ENCODE measurements at regions of chr3 and their contacts with region 1.

Region 1: GRCh38 chr3:194682694-194683310 is 2.9 kb upstream of the FAM43A start:
- DNase-seq: peak; percentile 70 to 93 (median 78)
- H3K4me3 ChIP-seq: no peak overlapping the region
- H3K27ac ChIP-seq: peak overlapping the region in 3 of 5 donors; percentile 13 to 60 (median 48)
- H3K4me1 ChIP-seq: peaks cover 18 to 30% of the 10 kb centered on the region in 2 donors
- H3K27me3 ChIP-seq: peaks cover 7% of the 10 kb centered on the region
- CTCF ChIP-seq: peak; percentile 63 to 97 (median 93)
- POLR2A ChIP-seq: no peak

Region 2: GRCh38 chr3:194536871-194537637 is 145.7 kb before region 1 on chr3:
- intact Hi-C with region 1: no loop called
- DNase-seq: peak; percentile 44 to 73 (median 62)
- H3K4me3 ChIP-seq: no peak overlapping the region
- H3K27ac ChIP-seq: peak overlapping the region in 2 of 5 donors; percentile 58 to 62
- H3K4me1 ChIP-seq: peaks cover 9 to 10% of the 10 kb centered on the region in 2 donors
- H3K27me3 ChIP-seq: no peaks in the 10 kb centered on the region
- CTCF ChIP-seq: no peak
- POLR2A ChIP-seq: no peak

Region 3: DNA sequence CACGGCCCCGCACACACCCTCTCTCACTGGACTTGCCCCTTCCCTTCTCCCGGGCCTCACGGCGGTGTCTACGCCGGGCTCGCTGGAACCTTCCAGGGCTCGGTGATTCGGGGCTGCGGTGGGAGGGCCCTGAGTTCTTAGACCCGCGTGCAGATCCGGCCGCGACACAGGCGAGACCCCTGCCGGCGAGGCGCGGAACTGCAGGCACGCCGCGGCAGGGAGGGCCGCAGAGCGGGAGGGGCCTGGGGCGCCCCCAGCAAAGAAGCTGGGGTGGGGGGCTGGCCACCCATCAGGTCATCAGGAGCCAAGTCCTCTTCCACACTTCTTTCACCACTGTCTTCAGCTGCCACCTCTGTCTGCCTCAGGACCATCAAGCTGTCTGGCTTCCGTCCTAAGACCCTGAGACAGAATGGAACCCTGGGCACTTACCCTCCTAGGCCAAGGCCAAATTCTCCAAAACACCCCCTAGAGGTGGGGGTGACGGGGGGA is 423.7 kb after region 1 on chr3:
- intact Hi-C with region 1: loop called (anchors 5 kb)
- DNase-seq: peak; percentile 29 to 80 (median 64)
- H3K4me3 ChIP-seq: peak overlapping the region in 1 of 4 donors; percentile 31
- H3K27ac ChIP-seq: no peak overlapping the region
- H3K4me1 ChIP-seq: peaks cover 8 to 17% of the 10 kb centered on the region in 2 donors
- H3K27me3 ChIP-seq: no peaks in the 10 kb centered on the region
- CTCF ChIP-seq: peak; percentile 84 to 100 (median 98)
- POLR2A ChIP-seq: no peak

Region 4: GRCh38 chr3:195259475-195260279 is 576.9 kb after region 1 on chr3:
- intact Hi-C with region 1: loop called in 1 of 2 experiments (anchors 2 kb)
- DNase-seq: peak; percentile 84 to 95 (median 89)
- H3K4me3 ChIP-seq: peak overlapping the region in 3 of 4 donors; percentile 23 to 76 (median 71)
- H3K27ac ChIP-seq: peak overlapping the region; percentile 52 to 93 (median 66)
- H3K4me1 ChIP-seq: peaks cover 9 to 24% of the 10 kb centered on the region in 2 donors
- H3K27me3 ChIP-seq: no peaks in the 10 kb centered on the region
- CTCF ChIP-seq: peak in 4 of 6 experiments; percentile 21 to 100 (median 92)
- POLR2A ChIP-seq: peak; percentile 31 to 66

Region 5: GRCh38 chr3:195522254-195523023 is 839.6 kb after region 1 on chr3:
- intact Hi-C with region 1: loop called in 1 of 2 experiments (anchors 10 kb)
- DNase-seq: no peak
- H3K4me3 ChIP-seq: no peak overlapping the region
- H3K27ac ChIP-seq: no peak overlapping the region
- H3K4me1 ChIP-seq: no peaks in the 10 kb centered on the region
- H3K27me3 ChIP-seq: no peaks in the 10 kb centered on the region
- CTCF ChIP-seq: peak; percentile 67 to 88 (median 80)
- POLR2A ChIP-seq: no peak

Measured in adrenal gland (tissue), 19 donors.